ENCODE measurements at regions of chrX and their contacts with region 1.

Region 1: GRCh38 chrX:69197690-69198089 is 32.4 kb upstream of the PJA1 start:
- DNase-seq: no peak
- H3K4me3 ChIP-seq: no peak overlapping the region
- H3K27ac ChIP-seq: no peak overlapping the region
- H3K4me1 ChIP-seq: no peaks in the 10 kb centered on the region
- H3K27me3 ChIP-seq: peaks cover 0 to 71% of the 10 kb centered on the region in 2 donors
- CTCF ChIP-seq: no peak
- POLR2A ChIP-seq: no peak

Region 2: GRCh38 chrX:68588602-68589371 is 608.9 kb before region 1 on chrX:
- intact Hi-C with region 1: no loop called
- DNase-seq: no peak
- H3K4me3 ChIP-seq: no peak overlapping the region
- H3K27ac ChIP-seq: no peak overlapping the region
- H3K4me1 ChIP-seq: no peaks in the 10 kb centered on the region
- H3K27me3 ChIP-seq: peaks cover 0 to 27% of the 10 kb centered on the region in 2 donors
- CTCF ChIP-seq: no peak
- POLR2A ChIP-seq: no peak

Region 3: GRCh38 chrX:69158166-69158980 is 39.3 kb before region 1 on chrX:
- intact Hi-C with region 1: no loop called
- DNase-seq: no peak
- H3K4me3 ChIP-seq: no peak overlapping the region
- H3K27ac ChIP-seq: no peak overlapping the region
- H3K4me1 ChIP-seq: no peaks in the 10 kb centered on the region
- H3K27me3 ChIP-seq: peaks cover 0 to 64% of the 10 kb centered on the region in 2 donors
- CTCF ChIP-seq: peak in 1 of 3 donors; percentile 22
- POLR2A ChIP-seq: no peak

Region 4: GRCh38 chrX:69216911-69217310 is 19.2 kb after region 1 on chrX:
- intact Hi-C with region 1: loop called (anchors 2 kb)
- DNase-seq: no peak
- H3K4me3 ChIP-seq: no peak overlapping the region
- H3K27ac ChIP-seq: no peak overlapping the region
- H3K4me1 ChIP-seq: no peaks in the 10 kb centered on the region
- H3K27me3 ChIP-seq: peaks cover 0 to 77% of the 10 kb centered on the region in 2 donors
- CTCF ChIP-seq: no peak
- POLR2A ChIP-seq: no peak